Common myeloid progenitor, CD34-positive (primary cell): ENCODE measurements at regions of chr4 and their contacts with region 1.

Region 1: GRCh38 chr4:80221161-80221560 is 23.9 kb downstream of the PRDM8 start:
- DNase-seq: peak in 2 of 3 donors; percentile 42 to 43
- H3K4me3 ChIP-seq: no peak overlapping the region
- H3K27ac ChIP-seq: no peak overlapping the region
- H3K4me1 ChIP-seq: no peaks in the 10 kb centered on the region
- H3K27me3 ChIP-seq: peaks cover 0 to 3% (median 0%) of the 10 kb centered on the region in 5 experiments

Region 2: GRCh38 chr4:80072744-80073472 is 148.3 kb before region 1 on chr4 and contains the start of gene ANTXR2:
- CTCF ChIA-PET with region 1: no interaction called
- POLR2A ChIA-PET with region 1: no interaction called
- DNase-seq: peak; percentile 90 to 98 (median 96)
- H3K4me3 ChIP-seq: peak within 1 kb of the TSS; percentile 87 to 98 (median 95)
- H3K27ac ChIP-seq: peak within 1 kb of the TSS; percentile 92 to 95
- H3K4me1 ChIP-seq: peaks cover 42 to 75% (median 53%) of the 10 kb centered on the region in 4 experiments
- H3K27me3 ChIP-seq: no peaks in the 10 kb centered on the region

Region 3: DNA sequence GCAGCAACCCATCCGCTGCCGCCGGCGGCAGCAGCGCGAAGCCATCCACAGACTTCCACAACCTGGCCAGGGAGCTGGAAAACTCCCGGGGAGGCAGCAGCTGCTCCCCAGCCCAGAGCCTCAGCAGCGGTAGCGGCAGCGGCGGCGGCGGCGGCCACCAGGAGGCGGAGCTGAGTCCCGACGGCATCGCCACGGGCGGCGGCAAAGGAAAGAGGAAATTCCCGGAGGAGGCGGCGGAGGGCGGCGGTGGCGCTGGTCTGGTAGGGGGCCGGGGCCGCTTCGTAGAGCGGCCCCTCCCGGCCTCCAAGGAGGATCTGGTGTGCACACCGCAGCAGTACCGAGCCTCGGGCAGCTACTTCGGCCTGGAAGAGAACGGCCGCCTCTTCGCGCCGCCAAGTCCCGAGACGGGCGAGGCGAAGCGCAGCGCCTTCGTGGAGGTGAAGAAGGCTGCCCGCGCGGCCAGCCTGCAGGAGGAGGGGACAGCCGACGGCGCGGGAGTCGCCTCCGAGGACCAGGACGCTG is 18.9 kb before region 1 on chr4:
- CTCF ChIA-PET with region 1: interaction called, 10 read pairs
- POLR2A ChIA-PET with region 1: no interaction called
- DNase-seq: peak; percentile 75 to 86 (median 78)
- H3K4me3 ChIP-seq: peak overlapping the region; percentile 53 to 80 (median 75)
- H3K27ac ChIP-seq: peak overlapping the region; percentile 33 to 64
- H3K4me1 ChIP-seq: peaks cover 2 to 33% (median 23%) of the 10 kb centered on the region in 4 experiments
- H3K27me3 ChIP-seq: peaks cover 0 to 19% (median 2%) of the 10 kb centered on the region in 5 experiments

Region 4: DNA sequence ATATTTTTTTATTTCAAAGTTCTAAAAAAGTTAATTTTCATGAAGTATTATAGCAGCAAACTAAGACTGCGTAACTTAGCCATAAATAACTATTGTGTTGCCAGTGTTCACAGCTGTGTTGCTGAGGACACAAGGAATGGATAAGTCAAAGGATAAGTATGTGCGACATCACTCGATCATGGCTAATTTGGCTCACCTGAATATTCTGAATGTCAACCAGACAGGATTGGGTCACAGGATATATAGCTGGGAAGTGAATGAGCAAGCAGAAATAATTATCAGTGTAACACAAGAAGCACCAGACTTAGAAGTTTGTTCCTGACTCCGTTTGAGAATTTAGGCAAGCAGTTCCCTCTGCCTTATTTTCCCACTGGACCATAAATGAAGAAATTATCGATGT is 10.0 kb after region 1 on chr4:
- CTCF ChIA-PET with region 1: interaction called, 14 read pairs
- POLR2A ChIA-PET with region 1: no interaction called
- DNase-seq: no peak
- H3K4me3 ChIP-seq: no peak overlapping the region
- H3K27ac ChIP-seq: no peak overlapping the region
- H3K4me1 ChIP-seq: no peaks in the 10 kb centered on the region
- H3K27me3 ChIP-seq: no peaks in the 10 kb centered on the region